Activated B cell treated with CpG ODN at 0.5 μM for 24 hours (primary cell): ENCODE measurements at regions of chr19 and their contacts with region 1.

Region 1: DNA sequence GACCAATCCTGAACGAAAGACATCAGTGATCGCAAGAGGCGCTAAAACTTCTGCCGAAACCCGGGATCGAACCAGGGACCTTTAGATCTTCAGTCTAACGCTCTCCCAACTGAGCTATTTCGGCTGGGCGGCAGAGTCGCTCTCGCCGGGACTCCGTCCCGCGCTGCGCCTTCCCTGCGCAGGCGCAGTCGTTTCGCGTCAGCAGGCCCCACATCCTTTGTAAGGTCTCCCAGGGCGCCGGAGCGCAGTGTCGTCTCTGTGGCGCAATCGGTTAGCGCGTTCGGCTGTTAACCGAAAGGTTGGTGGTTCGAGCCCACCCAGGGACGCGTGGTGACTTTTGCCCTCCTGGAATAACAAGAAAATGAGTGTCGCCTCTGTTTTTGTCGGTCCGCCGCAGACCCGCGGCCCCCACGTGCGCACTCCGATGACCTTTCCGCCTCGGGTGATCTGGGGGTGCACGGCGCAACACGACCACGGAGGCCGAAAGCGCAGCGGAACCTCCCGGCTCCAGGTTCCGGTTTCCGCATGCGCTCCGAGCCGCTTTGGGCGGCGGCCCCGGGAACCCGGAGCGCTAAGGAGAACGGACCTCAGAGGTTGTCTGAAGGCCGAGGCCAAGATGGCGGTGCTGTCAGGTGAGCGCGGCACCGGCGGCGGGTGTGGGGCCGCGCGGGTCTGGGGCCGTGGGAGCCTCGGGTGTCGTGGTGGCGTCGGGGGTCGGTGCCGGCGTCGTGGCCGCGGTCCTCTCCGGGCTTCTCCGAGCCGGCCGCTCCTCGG is at the start of gene NDUFS7:
- DNase-seq: peak; percentile 98
- ATAC-seq: peak; percentile 86
- H3K4me3 Mint-ChIP-seq: peak within 1 kb of the TSS; percentile 93
- H3K27ac Mint-ChIP-seq: peak within 1 kb of the TSS; percentile 99
- H3K4me1 Mint-ChIP-seq: peaks cover 23% of the 10 kb centered on the region
- H3K27me3 Mint-ChIP-seq: peaks cover 3% of the 10 kb centered on the region
- CTCF ChIP-seq: no peak
- total RNA-seq, gene NDUFS7: 82.1 and 84.3 TPM in 2 replicates

Region 2: DNA sequence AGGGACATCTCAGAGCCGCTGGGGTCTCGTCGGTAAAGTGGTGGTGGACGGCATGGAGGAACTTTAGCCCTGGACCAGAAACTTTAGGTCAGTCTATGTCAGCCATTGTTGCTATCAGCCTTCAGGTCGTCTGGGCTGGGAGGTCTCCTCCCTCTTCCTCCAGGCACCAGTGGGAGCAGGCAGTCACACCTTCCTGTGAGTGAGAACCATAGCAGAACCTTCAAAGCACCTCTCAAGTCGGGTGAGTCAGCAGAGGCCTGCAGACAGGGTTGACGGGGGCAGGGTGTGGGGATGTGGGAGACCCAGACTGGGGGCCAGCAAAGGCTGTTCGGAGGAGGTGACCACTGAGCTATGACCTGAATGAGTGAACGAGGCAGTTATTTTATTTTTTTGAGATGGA is 194.1 kb before region 1 on chr19:
- CTCF ChIA-PET with region 1: no interaction called
- POLR2A ChIA-PET with region 1: interaction called, 10 read pairs
- intact Hi-C with region 1: no loop called
- DNase-seq: no peak
- ATAC-seq: no peak
- H3K4me3 Mint-ChIP-seq: no peak overlapping the region
- H3K27ac Mint-ChIP-seq: no peak overlapping the region
- H3K4me1 Mint-ChIP-seq: no peaks in the 10 kb centered on the region
- H3K27me3 Mint-ChIP-seq: no peaks in the 10 kb centered on the region
- CTCF ChIP-seq: no peak

Region 3: GRCh38 chr19:1355568-1356507 is 27.7 kb before region 1 on chr19:
- CTCF ChIA-PET with region 1: no interaction called
- POLR2A ChIA-PET with region 1: interaction called, 3 read pairs
- intact Hi-C with region 1: loop called (anchors 1 kb)
- DNase-seq: no peak
- ATAC-seq: no peak
- H3K4me3 Mint-ChIP-seq: peak overlapping the region; percentile 86
- H3K27ac Mint-ChIP-seq: peak overlapping the region; percentile 70
- H3K4me1 Mint-ChIP-seq: peaks cover 13% of the 10 kb centered on the region
- H3K27me3 Mint-ChIP-seq: no peaks in the 10 kb centered on the region
- CTCF ChIP-seq: no peak

Region 4: DNA sequence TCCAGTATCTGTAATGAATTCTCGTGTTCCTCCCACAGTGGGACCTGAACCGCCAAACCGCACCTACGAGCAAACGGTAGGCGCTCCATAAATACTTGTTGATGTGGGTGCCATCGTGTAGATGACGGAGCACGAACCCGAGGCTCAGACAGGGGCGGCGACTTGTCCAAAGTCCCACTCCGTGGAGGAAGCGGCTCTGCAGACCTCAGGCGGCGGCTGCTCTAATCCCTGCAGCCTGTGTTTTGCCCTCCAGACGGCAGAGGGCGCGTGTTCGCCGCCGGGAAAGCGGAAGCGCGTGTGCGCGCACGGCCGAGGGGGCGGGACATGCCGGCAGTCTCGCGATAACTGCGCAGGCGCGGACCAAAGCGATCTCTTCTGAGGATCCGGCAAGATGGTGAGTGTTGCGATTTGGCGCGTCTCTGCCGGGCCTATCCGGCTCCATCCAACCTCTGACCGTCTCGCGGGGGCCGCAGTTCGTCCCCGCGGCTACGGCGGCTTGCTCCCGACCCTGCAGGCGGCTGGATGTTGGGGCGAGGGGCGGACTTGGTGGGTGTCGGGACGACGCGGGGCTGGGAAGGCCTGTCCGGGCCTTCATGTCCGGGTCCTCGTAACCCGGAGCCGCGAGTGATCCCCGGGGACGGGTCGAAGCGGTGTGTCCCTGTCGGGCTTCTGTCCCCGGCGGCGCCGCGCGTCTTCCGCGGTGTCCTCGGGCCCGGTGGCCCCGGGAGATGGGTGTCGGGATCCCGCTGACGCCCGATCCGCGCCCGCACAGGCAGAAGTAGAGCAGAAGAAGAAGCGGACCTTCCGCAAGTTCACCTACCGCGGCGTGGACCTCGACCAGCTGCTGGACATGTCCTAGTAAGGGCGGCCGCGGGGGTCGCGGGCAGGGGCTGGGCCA is 54.8 kb after region 1 on chr19 and contains the start of gene RPS15:
- CTCF ChIA-PET with region 1: no interaction called
- POLR2A ChIA-PET with region 1: no interaction called
- intact Hi-C with region 1: loop called (anchors 2 kb)
- DNase-seq: peak; percentile 94
- ATAC-seq: peak; percentile 92
- H3K4me3 Mint-ChIP-seq: peak within 1 kb of the TSS; percentile 99
- H3K27ac Mint-ChIP-seq: peak within 1 kb of the TSS; percentile 99
- H3K4me1 Mint-ChIP-seq: peaks cover 26% of the 10 kb centered on the region
- H3K27me3 Mint-ChIP-seq: no peaks in the 10 kb centered on the region
- CTCF ChIP-seq: no peak
- total RNA-seq, gene RPS15: 1,788 and 2,029 TPM in 2 replicates

Region 5: DNA sequence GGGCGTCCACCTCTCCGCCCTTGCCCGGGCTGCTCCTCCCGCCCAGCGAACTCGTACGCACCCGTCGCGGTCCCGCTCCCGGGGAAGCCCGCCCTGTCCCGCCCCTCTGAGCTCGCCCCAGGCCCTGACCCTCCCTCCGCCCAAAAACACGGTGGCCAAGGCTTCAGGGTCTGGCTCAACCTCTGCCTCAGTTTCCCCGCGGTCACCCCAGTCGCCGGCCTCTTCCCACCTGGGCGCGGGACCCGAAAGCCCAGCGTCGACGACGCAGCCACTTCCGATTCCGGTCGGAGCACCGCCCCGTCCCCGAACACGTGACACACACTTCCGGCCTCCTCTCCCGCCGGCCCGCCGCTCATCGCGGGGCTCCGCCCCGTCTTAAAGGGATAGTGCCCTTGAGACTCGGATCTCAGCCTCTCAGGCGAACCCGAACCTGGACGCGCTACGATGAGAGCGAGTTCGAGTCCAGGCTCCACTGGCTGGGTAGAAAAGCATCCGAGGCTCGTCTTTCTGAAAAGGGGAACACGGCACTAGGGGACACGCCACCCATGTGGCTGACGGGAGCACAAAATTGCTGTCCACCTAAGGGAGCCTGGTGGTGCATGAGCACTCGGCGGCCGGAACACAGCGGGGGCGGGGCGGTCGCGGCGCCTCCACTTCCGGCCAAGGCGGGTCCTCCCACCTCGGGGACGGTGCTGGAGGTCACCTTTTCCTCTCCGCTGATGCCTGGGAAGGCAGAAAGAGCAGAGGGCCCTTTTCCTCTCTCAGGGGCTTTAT is 95.6 kb after region 1 on chr19 and contains the start of gene C19orf25:
- CTCF ChIA-PET with region 1: no interaction called
- POLR2A ChIA-PET with region 1: no interaction called
- intact Hi-C with region 1: loop called (anchors 1 kb)
- DNase-seq: peak; percentile 89
- ATAC-seq: peak; percentile 93
- H3K4me3 Mint-ChIP-seq: peak within 1 kb of the TSS; percentile 98
- H3K27ac Mint-ChIP-seq: peak within 1 kb of the TSS; percentile 95
- H3K4me1 Mint-ChIP-seq: peaks cover 18% of the 10 kb centered on the region
- H3K27me3 Mint-ChIP-seq: no peaks in the 10 kb centered on the region
- CTCF ChIP-seq: no peak
- total RNA-seq, gene C19orf25: 42.8 and 55.7 TPM in 2 replicates

Region 6: GRCh38 chr19:1929021-1929742 is 545.7 kb after region 1 on chr19:
- CTCF ChIA-PET with region 1: no interaction called
- POLR2A ChIA-PET with region 1: interaction called, 10 read pairs
- intact Hi-C with region 1: no loop called
- DNase-seq: peak; percentile 86
- ATAC-seq: peak; percentile 82
- H3K4me3 Mint-ChIP-seq: peak overlapping the region; percentile 81
- H3K27ac Mint-ChIP-seq: no peak overlapping the region
- H3K4me1 Mint-ChIP-seq: peaks cover 46% of the 10 kb centered on the region
- H3K27me3 Mint-ChIP-seq: no peaks in the 10 kb centered on the region
- CTCF ChIP-seq: peak; percentile 59